ENCODE measurements at regions of chr3 and their contacts with region 1.

Region 1: DNA sequence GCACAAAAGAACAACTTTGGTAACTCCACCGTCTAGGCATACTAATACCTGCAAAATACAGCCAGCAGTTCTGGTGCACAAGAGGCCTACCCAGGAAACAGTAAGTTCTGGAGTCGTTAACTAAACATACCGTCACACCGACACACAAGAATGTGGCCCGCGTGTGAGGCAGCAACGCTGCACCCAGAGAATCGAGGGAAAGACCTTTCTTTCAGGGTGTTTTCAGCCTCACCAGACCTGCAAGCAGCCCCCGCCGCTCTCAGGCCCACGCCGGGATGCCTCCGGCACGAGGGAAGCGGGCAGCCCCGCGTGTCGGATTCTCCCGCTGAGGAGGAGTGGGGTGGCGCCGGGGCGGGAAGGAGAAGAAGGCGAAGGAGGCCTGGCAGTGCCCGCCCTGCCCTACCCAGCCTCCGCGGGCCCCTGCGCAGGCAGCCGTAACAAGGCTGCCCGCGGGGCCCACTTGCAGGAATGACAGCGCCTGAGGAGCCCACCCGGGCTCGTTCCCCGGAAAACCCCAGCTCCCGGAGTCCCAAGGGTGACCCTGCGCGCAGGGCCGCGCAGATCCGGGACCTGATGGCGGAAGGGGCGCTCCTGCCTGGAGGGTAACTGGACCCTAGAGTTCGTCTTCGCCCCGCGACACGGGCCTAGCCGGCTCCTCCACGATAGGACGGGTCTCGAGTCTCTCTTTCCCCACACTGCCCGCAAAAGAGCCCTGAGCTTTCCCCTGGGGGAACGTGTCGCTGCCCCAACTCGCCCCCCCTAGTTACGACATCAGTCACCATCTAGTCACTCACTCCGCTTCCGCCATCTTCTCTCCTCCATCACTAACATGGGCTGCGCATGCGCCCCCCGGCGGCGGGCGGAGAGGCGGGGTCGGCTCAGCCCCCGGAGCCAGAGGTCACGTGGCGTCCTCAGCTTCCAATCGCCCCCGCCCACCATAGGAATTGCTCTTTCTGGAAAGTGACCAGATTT is at the start of gene PHC3:
- DNase-seq: peak; percentile 77 to 96 (median 91)
- ATAC-seq: peak; percentile 67
- H3K4me3 ChIP-seq: peak within 1 kb of the TSS; percentile 84 to 98
- H3K4me3 Mint-ChIP-seq: peak within 1 kb of the TSS; percentile 99
- H3K27ac ChIP-seq: peak within 1 kb of the TSS; percentile 98 to 99
- H3K27ac Mint-ChIP-seq: peak within 1 kb of the TSS; percentile 100
- H3K4me1 ChIP-seq: peaks cover 31% of the 10 kb centered on the region
- H3K4me1 Mint-ChIP-seq: peaks cover 38% of the 10 kb centered on the region
- H3K27me3 ChIP-seq: no peaks in the 10 kb centered on the region
- H3K27me3 Mint-ChIP-seq: no peaks in the 10 kb centered on the region
- CTCF ChIP-seq: no peak
- total RNA-seq, gene PHC3: 131 to 136 TPM

Region 2: GRCh38 chr3:169863458-169863899 is 317.7 kb before region 1 on chr3:
- CTCF ChIA-PET with region 1: no interaction called
- POLR2A ChIA-PET with region 1: no interaction called
- intact Hi-C with region 1: loop called in 1 of 2 experiments (anchors 5 kb)
- DNase-seq: peak; percentile 21 to 82 (median 59)
- ATAC-seq: peak; percentile 69
- H3K4me3 ChIP-seq: no peak overlapping the region
- H3K4me3 Mint-ChIP-seq: no peak overlapping the region
- H3K27ac ChIP-seq: no peak overlapping the region
- H3K27ac Mint-ChIP-seq: no peak overlapping the region
- H3K4me1 ChIP-seq: peaks cover 15% of the 10 kb centered on the region
- H3K4me1 Mint-ChIP-seq: peaks cover 20% of the 10 kb centered on the region
- H3K27me3 ChIP-seq: peaks cover 0 to 4% of the 10 kb centered on the region in 2 experiments
- H3K27me3 Mint-ChIP-seq: peaks cover 5% of the 10 kb centered on the region
- CTCF ChIP-seq: peak; percentile 95

Region 3: DNA sequence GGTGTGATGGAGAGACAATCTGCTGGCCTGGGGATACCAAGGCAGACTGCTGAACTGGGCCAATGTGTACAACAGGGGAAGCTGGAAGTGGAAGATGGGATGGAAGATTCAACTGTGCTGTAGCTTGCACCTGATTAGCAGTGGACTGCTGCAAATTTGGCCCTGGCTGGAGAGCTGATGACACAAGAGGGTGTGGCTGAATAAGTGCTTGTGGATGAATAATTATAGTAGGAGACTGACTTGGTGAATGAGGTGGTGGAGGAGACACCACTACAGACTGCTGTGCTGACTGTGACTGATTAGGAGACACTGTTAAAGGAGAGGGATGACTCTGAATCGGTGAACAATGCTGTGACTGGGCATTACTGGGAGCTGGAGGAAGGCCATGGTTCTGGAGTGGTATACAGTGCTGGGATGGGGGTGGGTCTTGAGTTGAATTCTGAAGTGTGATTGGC is 52.2 kb before region 1 on chr3:
- CTCF ChIA-PET with region 1: no interaction called
- POLR2A ChIA-PET with region 1: interaction called, 3 read pairs
- intact Hi-C with region 1: loop called in 1 of 2 experiments (anchors 5 kb)
- DNase-seq: no peak
- ATAC-seq: peak; percentile 34
- H3K4me3 ChIP-seq: no peak overlapping the region
- H3K4me3 Mint-ChIP-seq: peak overlapping the region; percentile 55
- H3K27ac ChIP-seq: peak overlapping the region in 1 of 2 experiments; percentile 8
- H3K27ac Mint-ChIP-seq: peak overlapping the region; percentile 81
- H3K4me1 ChIP-seq: peaks cover 17% of the 10 kb centered on the region
- H3K4me1 Mint-ChIP-seq: peaks cover 31% of the 10 kb centered on the region
- H3K27me3 ChIP-seq: no peaks in the 10 kb centered on the region
- H3K27me3 Mint-ChIP-seq: no peaks in the 10 kb centered on the region
- CTCF ChIP-seq: no peak

Region 4: DNA sequence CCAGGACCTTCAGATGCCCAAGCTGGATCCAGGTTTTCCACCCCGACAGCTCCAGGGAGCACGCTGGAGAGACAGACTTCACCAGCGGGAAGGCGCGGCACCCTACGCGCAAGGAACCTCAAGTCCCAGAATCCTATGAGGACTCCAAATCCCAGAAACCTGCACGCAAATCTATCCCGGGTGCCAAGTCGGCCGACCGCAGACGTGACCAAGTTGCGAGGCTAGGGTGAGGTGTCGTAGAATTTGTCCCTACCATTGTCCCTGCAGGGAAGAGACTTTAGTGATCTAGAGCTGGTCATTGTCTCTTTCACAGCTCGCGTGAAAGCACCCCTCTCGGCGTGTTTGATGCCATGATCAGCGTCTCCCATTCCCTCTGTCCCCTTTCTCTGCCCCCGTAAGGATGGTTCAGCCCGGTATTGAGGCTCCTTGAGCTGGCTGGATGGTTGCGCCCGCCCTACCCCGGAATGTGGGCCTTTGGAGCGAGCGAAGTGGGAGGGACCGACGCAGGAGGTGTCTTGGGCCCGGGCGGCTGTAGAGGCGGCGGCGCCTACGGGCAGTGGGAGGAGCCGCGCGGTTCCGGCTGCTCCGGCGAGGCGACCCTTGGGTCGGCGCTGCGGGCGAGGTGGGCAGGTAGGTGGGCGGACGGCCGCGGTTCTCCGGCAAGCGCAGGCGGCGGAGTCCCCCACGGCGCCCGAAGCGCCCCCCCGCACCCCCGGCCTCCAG is 40.9 kb after region 1 on chr3 and contains the start of gene PRKCI:
- CTCF ChIA-PET with region 1: no interaction called
- POLR2A ChIA-PET with region 1: interaction called, 5 read pairs
- intact Hi-C with region 1: loop called (anchors 1 to 2 kb)
- DNase-seq: peak; percentile 75 to 94 (median 86)
- ATAC-seq: peak; percentile 83
- H3K4me3 ChIP-seq: peak within 1 kb of the TSS; percentile 64 to 92
- H3K4me3 Mint-ChIP-seq: peak within 1 kb of the TSS; percentile 91
- H3K27ac ChIP-seq: peak within 1 kb of the TSS; percentile 76 to 82
- H3K27ac Mint-ChIP-seq: peak within 1 kb of the TSS; percentile 93
- H3K4me1 ChIP-seq: peaks cover 3% of the 10 kb centered on the region
- H3K4me1 Mint-ChIP-seq: peaks cover 36% of the 10 kb centered on the region
- H3K27me3 ChIP-seq: no peaks in the 10 kb centered on the region
- H3K27me3 Mint-ChIP-seq: no peaks in the 10 kb centered on the region
- CTCF ChIP-seq: no peak
- total RNA-seq, gene PRKCI: 17.6 to 20.2 TPM

Region 5: GRCh38 chr3:170689893-170690660 is 508.9 kb after region 1 on chr3:
- CTCF ChIA-PET with region 1: no interaction called
- POLR2A ChIA-PET with region 1: no interaction called
- intact Hi-C with region 1: loop called (anchors 5 to 10 kb)
- DNase-seq: peak in 8 of 9 experiments; percentile 17 to 59 (median 28)
- ATAC-seq: no peak
- H3K4me3 ChIP-seq: no peak overlapping the region
- H3K4me3 Mint-ChIP-seq: no peak overlapping the region
- H3K27ac ChIP-seq: no peak overlapping the region
- H3K27ac Mint-ChIP-seq: no peak overlapping the region
- H3K4me1 ChIP-seq: no peaks in the 10 kb centered on the region
- H3K4me1 Mint-ChIP-seq: no peaks in the 10 kb centered on the region
- H3K27me3 ChIP-seq: no peaks in the 10 kb centered on the region
- H3K27me3 Mint-ChIP-seq: no peaks in the 10 kb centered on the region
- CTCF ChIP-seq: peak; percentile 34

Region 6: GRCh38 chr3:170780955-170781354 is 599.8 kb after region 1 on chr3:
- CTCF ChIA-PET with region 1: no interaction called
- POLR2A ChIA-PET with region 1: no interaction called
- intact Hi-C with region 1: no loop called
- DNase-seq: no peak
- ATAC-seq: no peak
- H3K4me3 ChIP-seq: no peak overlapping the region
- H3K4me3 Mint-ChIP-seq: no peak overlapping the region
- H3K27ac ChIP-seq: no peak overlapping the region
- H3K27ac Mint-ChIP-seq: no peak overlapping the region
- H3K4me1 ChIP-seq: no peaks in the 10 kb centered on the region
- H3K4me1 Mint-ChIP-seq: no peaks in the 10 kb centered on the region
- H3K27me3 ChIP-seq: peaks cover 0 to 2% of the 10 kb centered on the region in 2 experiments
- H3K27me3 Mint-ChIP-seq: peaks cover 38% of the 10 kb centered on the region
- CTCF ChIP-seq: no peak

Measured in CD8-positive, alpha-beta T cell (primary cell).